Panc1 (cell line): ENCODE measurements at regions of chr1 and their contacts with region 1.

Region 1: DNA sequence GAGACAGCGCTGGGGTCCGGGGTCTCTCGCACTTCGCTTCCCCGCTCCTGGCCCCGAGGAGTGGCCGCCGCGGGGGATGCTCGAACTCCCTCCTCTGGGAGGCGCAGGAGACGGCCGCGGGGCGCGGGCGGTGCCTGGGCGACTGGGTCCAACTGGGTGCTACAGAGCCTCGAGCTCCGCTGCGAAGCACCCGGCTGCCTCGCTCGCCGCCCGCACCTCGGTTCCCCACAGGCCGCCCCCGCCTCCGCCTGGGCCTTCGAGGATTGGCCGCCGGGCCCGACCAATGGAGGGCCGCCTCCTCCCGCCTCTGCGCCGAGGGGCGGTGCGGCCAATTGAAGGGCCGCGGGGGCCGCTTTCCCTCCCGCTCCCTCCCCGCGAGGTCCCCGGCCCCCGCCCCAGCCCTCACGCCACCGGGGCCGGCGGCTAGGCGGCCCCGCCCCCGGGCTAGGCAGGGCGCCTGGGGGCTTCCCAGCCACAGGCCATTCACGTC is at the start of gene CNN3:
- DNase-seq: no peak
- ATAC-seq: peak; percentile 94
- H3K4me3 ChIP-seq: peak within 1 kb of the TSS; percentile 75
- H3K27ac ChIP-seq: peak within 1 kb of the TSS; percentile 88
- H3K4me1 ChIP-seq: peaks cover 18% of the 10 kb centered on the region
- H3K27me3 ChIP-seq: no peaks in the 10 kb centered on the region
- CTCF ChIP-seq: no peak
- total RNA-seq, gene CNN3: 72.3 TPM

Region 2: DNA sequence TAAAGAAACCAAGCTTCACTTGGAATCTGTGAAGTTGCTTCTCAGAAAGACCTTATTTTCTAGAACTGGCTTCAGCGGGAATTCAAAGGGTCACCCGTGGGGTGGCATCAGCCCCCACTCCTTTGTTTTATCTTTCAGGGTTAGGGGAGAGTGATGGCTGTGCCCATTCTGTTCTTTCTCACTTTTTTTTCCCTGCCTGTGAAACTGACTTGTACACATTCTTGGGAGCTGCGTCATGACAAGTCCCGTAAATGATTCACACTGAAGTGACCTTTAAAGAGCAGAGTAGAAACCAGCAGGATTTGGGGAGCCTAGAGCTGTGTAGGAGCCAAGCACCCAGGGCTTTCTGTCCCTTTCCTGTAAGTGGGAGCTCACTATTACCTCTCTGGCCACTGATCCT is 63.0 kb before region 1 on chr1:
- CTCF ChIA-PET with region 1: no interaction called
- POLR2A ChIA-PET with region 1: no interaction called
- in situ Hi-C with region 1: no loop called
- intact Hi-C with region 1: loop called (anchors 10 kb)
- DNase-seq: peak; percentile 38
- ATAC-seq: peak; percentile 88
- H3K4me3 ChIP-seq: no peak overlapping the region
- H3K27ac ChIP-seq: 0 out of 2 replicates have a peak overlapping the region, but pooled peaks have one; percentile 23
- H3K4me1 ChIP-seq: peaks cover 14% of the 10 kb centered on the region
- H3K27me3 ChIP-seq: no peaks in the 10 kb centered on the region
- CTCF ChIP-seq: no peak